Transverse colon (tissue), 4 donors: ENCODE measurements at regions of chr1 and their contacts with region 1.

Region 1: DNA sequence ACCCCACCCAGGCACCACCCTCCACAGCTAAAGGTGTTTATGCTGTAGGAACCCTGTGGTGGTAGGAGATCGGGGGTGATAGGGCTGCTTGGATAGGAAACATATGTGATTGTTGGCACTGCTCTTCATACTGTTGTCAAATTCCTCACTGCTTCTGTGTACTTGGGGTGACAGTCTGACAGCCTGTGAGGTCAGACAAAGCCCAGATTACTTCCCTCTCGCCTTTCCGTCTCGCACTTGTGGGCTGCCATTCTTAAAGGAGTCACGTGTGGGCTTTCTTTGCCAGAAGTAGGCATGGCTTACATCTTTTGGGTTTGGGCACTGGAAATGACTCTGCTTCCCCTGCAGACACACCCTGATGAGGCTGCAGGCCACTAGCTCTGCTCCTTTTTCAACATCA is 363.8 kb downstream of the DISC1 start:
- DNase-seq: no peak
- H3K4me3 ChIP-seq: no peak overlapping the region
- H3K27ac ChIP-seq: no peak overlapping the region
- H3K4me1 ChIP-seq: no peaks in the 10 kb centered on the region
- H3K27me3 ChIP-seq: no peaks in the 10 kb centered on the region
- CTCF ChIP-seq: no peak
- EP300 ChIP-seq: no peak
- POLR2A ChIP-seq: no peak

Region 2: DNA sequence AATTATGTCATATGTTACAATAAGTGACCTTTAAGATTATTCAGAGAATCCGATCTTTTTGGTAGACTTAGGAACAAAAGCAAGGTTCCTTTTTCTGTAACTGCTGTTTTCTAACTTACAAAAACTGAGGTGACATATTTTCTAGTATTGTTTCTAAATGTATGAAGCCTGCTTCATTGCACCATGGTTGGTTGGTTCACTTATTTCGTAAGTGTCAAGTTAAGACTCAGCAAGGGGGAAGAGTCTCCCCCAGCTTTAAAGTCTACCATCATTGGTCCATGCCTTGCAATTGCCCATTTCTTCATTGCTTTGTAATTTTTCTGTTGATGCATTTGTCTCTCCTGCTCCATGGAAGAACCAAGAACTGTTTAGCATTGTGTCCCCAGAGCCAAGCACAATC is 226.9 kb before region 1 on chr1:
- in situ Hi-C with region 1: no loop called
- intact Hi-C with region 1: loop called (anchors 5 kb)
- DNase-seq: no peak
- H3K4me3 ChIP-seq: no peak overlapping the region
- H3K27ac ChIP-seq: no peak overlapping the region
- H3K4me1 ChIP-seq: no peaks in the 10 kb centered on the region
- H3K27me3 ChIP-seq: no peaks in the 10 kb centered on the region
- CTCF ChIP-seq: no peak
- EP300 ChIP-seq: no peak
- POLR2A ChIP-seq: no peak

Region 3: GRCh38 chr1:231949277-231950091 is 40.9 kb before region 1 on chr1:
- in situ Hi-C with region 1: no loop called
- intact Hi-C with region 1: no loop called
- DNase-seq: no peak
- H3K4me3 ChIP-seq: no peak overlapping the region
- H3K27ac ChIP-seq: peak overlapping the region in 3 of 4 donors; percentile 25 to 35 (median 28)
- H3K4me1 ChIP-seq: no peaks in the 10 kb centered on the region
- H3K27me3 ChIP-seq: no peaks in the 10 kb centered on the region
- CTCF ChIP-seq: no peak
- EP300 ChIP-seq: no peak
- POLR2A ChIP-seq: no peak

Region 4: GRCh38 chr1:232101231-232101630 is 110.8 kb after region 1 on chr1:
- in situ Hi-C with region 1: no loop called
- intact Hi-C with region 1: no loop called
- DNase-seq: no peak
- H3K4me3 ChIP-seq: no peak overlapping the region
- H3K27ac ChIP-seq: no peak overlapping the region
- H3K4me1 ChIP-seq: no peaks in the 10 kb centered on the region
- H3K27me3 ChIP-seq: no peaks in the 10 kb centered on the region
- CTCF ChIP-seq: no peak
- EP300 ChIP-seq: no peak
- POLR2A ChIP-seq: no peak

Region 5: GRCh38 chr1:232127190-232127589 is 136.8 kb after region 1 on chr1:
- in situ Hi-C with region 1: no loop called
- intact Hi-C with region 1: no loop called
- DNase-seq: no peak
- H3K4me3 ChIP-seq: no peak overlapping the region
- H3K27ac ChIP-seq: no peak overlapping the region
- H3K4me1 ChIP-seq: no peaks in the 10 kb centered on the region
- H3K27me3 ChIP-seq: no peaks in the 10 kb centered on the region
- CTCF ChIP-seq: no peak
- EP300 ChIP-seq: no peak
- POLR2A ChIP-seq: no peak